Right lobe of liver (tissue), 6 donors: ENCODE measurements at regions of chr1 and their contacts with region 1.

Region 1: DNA sequence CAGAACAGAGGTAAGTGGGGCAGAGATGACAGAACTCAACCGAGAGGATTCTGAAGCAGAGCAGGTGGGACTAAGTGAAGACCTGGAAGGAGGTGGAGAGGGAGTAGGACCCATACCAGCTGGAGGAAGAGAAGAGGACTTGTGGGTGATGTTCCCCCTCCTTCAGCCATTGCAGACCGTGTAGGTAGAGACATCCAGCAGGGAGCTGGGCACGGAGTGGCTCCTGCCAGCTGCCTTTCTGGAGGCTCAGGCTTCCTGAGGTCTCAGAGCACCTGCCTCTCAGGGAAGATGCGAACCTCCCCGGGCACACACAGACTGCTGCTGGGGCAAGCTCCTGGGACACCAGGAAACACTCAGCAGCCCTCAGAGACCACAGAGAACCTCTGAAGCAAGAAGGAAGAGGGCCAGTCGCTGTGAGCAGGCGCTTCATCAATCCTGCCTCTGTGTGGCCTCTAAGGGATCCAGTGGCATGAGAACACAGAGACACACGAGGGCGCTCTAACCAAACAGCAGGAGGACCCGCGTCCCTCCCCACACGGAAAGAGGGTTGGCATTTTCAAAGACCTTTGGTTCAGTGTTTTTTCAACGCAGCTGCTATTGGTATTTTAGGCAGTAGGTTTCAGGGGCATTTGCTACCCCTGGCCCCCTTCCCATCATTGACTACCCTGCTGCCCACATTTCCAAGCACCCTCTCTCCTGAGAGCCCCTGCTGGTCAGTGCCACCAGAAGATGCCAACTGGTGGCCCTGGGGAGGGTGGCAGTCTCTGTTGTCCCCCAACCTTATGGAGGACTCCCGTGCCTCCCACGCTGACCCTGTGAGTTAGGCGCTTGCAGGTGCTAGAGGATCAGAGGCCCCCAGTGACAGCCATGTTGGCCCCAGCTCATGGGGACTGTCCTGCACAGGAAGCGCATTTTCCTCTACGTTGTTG is 89.6 kb upstream of the EDN2 start:
- DNase-seq: peak; percentile 74 to 79 (median 77)
- ATAC-seq: peak; percentile 89 to 98 (median 94)
- H3K4me3 ChIP-seq: no peak overlapping the region
- H3K27ac ChIP-seq: no peak overlapping the region
- H3K4me1 ChIP-seq: no peaks in the 10 kb centered on the region
- H3K27me3 ChIP-seq: no peaks in the 10 kb centered on the region
- CTCF ChIP-seq: peak; percentile 81 to 91 (median 89)
- POLR2A ChIP-seq: no peak

Region 2: GRCh38 chr1:41626616-41627375 is 52.7 kb after region 1 on chr1:
- intact Hi-C with region 1: no loop called
- DNase-seq: no peak
- ATAC-seq: peak in 1 of 4 donors; percentile 44
- H3K4me3 ChIP-seq: no peak overlapping the region
- H3K27ac ChIP-seq: no peak overlapping the region
- H3K4me1 ChIP-seq: no peaks in the 10 kb centered on the region
- H3K27me3 ChIP-seq: no peaks in the 10 kb centered on the region
- CTCF ChIP-seq: no peak
- POLR2A ChIP-seq: no peak

Region 3: DNA sequence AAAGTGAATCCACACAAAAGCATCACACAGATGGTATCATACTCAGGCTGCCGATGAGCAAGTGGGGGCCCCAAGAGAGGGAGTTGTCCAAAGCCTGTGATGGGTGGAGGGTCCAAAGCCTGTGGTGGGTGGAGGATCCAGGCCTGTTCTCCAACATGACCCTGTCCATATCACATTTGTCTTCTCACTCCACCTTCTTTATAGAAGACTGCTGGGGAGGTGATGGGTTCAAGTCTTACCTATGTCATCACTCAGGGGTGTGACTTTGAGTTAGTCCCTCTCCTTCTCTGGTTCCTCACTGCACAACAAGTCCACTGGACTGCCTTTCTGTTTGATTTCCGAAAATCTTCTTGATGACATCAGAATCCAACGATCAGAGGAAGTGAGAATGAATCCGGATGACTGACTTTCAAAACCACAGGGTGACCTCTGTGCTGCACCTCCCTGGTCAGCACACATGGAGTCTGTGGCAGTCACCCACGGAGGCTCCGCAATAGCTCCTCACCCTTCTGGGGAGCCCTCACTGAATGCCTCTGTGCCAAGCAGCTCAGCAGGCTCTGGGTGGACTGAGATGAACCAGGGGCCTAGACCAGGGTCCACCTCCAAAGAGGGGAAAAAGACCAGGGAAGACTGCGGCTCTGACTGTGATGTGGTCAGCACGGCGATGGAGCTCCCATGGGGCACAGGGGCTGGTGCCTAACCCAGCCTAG is 177.9 kb after region 1 on chr1:
- intact Hi-C with region 1: no loop called
- DNase-seq: no peak
- ATAC-seq: peak; percentile 58 to 78 (median 70)
- H3K4me3 ChIP-seq: no peak overlapping the region
- H3K27ac ChIP-seq: no peak overlapping the region
- H3K4me1 ChIP-seq: no peaks in the 10 kb centered on the region
- H3K27me3 ChIP-seq: no peaks in the 10 kb centered on the region
- CTCF ChIP-seq: no peak
- POLR2A ChIP-seq: no peak

Region 4: DNA sequence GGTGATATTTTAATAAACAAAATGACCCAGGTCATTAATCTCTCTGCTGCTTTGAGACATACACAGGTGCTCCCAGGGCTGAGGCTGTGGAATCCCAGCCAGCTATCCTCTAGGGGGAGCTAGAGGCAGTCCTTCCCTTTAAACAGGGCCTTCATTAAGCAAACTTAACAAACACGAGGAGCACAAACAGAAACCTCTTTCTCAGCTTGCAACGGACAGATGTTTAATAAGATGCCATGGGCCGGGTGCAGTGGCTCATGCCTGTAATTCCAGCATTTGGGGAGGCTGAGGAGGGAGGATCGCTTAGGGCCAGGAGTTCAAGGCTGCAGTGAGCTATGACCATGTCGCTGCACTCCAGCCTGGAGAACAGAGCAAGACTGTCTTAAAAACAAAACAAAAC is 238.0 kb after region 1 on chr1:
- intact Hi-C with region 1: loop called in 1 of 2 experiments (anchors 10 kb)
- DNase-seq: no peak
- ATAC-seq: peak; percentile 68 to 87 (median 77)
- H3K4me3 ChIP-seq: no peak overlapping the region
- H3K27ac ChIP-seq: no peak overlapping the region
- H3K4me1 ChIP-seq: no peaks in the 10 kb centered on the region
- H3K27me3 ChIP-seq: no peaks in the 10 kb centered on the region
- CTCF ChIP-seq: peak; percentile 49 to 66 (median 58)
- POLR2A ChIP-seq: no peak